Body of pancreas (tissue), 4 donors: ENCODE measurements at regions of chr17 and their contacts with region 1.

Region 1: DNA sequence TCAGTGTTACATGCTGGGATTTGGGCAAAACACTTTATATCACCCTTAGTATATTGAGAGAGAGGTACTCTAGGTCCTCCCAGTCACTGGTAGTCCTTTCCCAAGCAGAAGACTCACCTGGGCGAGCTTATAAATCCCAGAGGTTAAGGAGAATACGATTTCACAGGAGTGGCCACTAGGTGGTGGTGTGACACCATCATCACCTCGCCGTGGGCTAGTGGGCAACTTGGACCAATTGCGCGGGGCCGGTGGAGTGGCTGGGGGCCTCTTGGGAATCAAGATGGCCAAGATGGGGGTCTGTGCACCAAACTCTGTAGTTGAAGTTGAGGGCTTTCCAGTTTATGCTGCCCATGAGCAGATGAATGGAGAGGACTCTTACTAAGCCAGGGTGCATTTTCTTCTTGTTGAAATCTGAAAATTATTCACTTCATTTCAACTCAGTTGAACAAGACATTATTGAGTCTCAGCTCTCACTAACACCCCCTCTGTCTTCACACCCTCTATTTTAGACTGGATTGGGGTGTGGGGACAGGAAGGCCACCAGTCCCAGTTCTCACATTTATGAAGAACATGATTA is 38.2 kb upstream of the PIRT start:
- DNase-seq: peak; percentile 36 to 62 (median 53)
- ATAC-seq: no peak
- H3K4me3 ChIP-seq: no peak overlapping the region
- H3K27ac ChIP-seq: no peak overlapping the region
- H3K4me1 ChIP-seq: no peaks in the 10 kb centered on the region
- H3K27me3 ChIP-seq: peaks cover 0 to 4% of the 10 kb centered on the region in 2 donors
- CTCF ChIP-seq: peak; percentile 56 to 68 (median 64)
- POLR2A ChIP-seq: no peak

Region 2: DNA sequence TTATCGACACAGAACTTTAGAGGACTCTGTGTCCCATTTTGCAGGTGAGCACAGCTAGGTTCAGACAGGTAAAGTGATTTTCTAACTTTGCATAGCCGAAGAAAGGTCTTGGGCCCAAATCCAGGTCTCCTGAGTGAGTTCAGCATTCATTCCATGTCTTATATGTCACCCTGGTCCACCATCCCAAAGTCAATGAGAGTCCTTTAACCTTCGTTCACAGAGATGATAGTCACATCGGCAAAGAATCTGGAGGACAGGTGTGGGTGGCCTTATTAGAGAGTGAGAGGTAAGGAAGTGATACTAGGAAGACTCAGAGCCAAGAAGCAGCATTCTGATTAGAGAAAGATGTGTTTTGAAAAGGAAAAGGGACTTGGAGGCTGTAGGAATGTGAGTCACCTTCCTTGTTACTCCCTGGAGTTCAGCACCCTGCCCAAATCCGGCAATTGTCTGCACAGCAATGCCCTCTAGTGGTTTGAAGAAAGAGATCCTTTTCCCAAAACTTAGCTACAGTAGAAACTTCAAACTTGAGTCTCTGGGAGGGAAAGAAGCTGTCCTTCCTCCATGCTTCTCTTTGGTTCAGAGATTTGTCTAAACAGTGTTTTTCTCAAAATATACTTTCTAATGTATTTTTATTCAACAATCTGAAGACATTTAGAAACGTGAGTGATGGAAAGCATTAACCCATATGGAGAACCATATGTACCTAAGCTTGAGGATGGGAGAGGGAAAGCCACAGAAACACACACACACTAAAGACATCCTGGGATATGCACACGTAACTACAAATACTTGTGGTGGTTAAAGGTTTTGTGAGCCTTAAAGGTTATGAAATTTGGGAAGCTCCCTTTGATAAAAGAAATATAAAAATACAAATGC is 268.5 kb after region 1 on chr17:
- intact Hi-C with region 1: loop called (anchors 5 kb)
- DNase-seq: peak; percentile 37 to 53 (median 44)
- ATAC-seq: no peak
- H3K4me3 ChIP-seq: no peak overlapping the region
- H3K27ac ChIP-seq: no peak overlapping the region
- H3K4me1 ChIP-seq: no peaks in the 10 kb centered on the region
- H3K27me3 ChIP-seq: no peaks in the 10 kb centered on the region
- CTCF ChIP-seq: peak; percentile 21 to 75 (median 65)
- POLR2A ChIP-seq: no peak

Region 3: GRCh38 chr17:11986942-11987329 is 1110.9 kb after region 1 on chr17:
- intact Hi-C with region 1: loop called (anchors 5 kb)
- DNase-seq: no peak
- ATAC-seq: no peak
- H3K4me3 ChIP-seq: no peak overlapping the region
- H3K27ac ChIP-seq: no peak overlapping the region
- H3K4me1 ChIP-seq: no peaks in the 10 kb centered on the region
- H3K27me3 ChIP-seq: no peaks in the 10 kb centered on the region
- CTCF ChIP-seq: peak in 6 of 7 experiments; percentile 17 to 59 (median 52)
- POLR2A ChIP-seq: no peak